MCF 10A (cell line): ENCODE measurements at regions of chr18 and their contacts with region 1.

Region 1: DNA sequence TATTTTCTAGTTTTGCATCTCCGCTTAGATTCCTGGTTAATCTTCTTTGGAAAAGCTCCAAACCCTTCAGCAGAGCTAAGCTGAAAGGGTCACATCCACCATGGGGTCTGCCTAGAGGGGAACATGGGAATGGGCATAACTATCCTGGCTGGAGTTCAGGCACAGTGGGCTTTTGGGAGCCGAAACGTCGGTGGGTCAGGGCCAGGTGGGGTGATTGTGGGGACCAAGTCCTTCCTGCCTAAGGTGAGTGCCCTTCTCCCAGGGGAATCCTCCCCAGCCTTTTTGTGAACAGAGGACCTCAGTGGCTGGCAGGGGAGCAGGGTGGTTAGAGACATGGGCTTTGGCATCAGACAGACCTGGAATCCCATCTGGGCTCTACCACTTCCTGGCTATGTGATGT is 60.3 kb downstream of the CELF4 start:
- DNase-seq: no peak
- H3K4me3 Mint-ChIP-seq: no peak overlapping the region
- H3K27ac Mint-ChIP-seq: no peak overlapping the region
- H3K4me1 Mint-ChIP-seq: no peaks in the 10 kb centered on the region
- H3K27me3 Mint-ChIP-seq: peaks cover 22% of the 10 kb centered on the region
- CTCF ChIP-seq: no peak

Region 2: GRCh38 chr18:37435996-37436395 is 69.3 kb before region 1 on chr18:
- CTCF ChIA-PET with region 1: no interaction called
- POLR2A ChIA-PET with region 1: no interaction called
- intact Hi-C with region 1: loop called (anchors 2 kb)
- DNase-seq: no peak
- H3K4me3 Mint-ChIP-seq: no peak overlapping the region
- H3K27ac Mint-ChIP-seq: no peak overlapping the region
- H3K4me1 Mint-ChIP-seq: no peaks in the 10 kb centered on the region
- H3K27me3 Mint-ChIP-seq: no peaks in the 10 kb centered on the region
- CTCF ChIP-seq: no peak